Heart left ventricle (tissue), 16 donors: ENCODE measurements at regions of chr10 and their contacts with region 1.

Region 1: GRCh38 chr10:43905512-43906236 is 257.0 kb upstream of the ZNF32 start:
- DNase-seq: peak in 4 of 5 donors; percentile 72 to 80 (median 74)
- ATAC-seq: peak; percentile 52 to 70 (median 68)
- H3K4me3 ChIP-seq: no peak overlapping the region
- H3K27ac ChIP-seq: peak overlapping the region; percentile 47 to 79 (median 58)
- H3K4me1 ChIP-seq: peaks cover 9 to 47% (median 26%) of the 10 kb centered on the region in 12 donors
- H3K27me3 ChIP-seq: no peaks in the 10 kb centered on the region
- CTCF ChIP-seq: no peak
- POLR2A ChIP-seq: no peak

Region 2: DNA sequence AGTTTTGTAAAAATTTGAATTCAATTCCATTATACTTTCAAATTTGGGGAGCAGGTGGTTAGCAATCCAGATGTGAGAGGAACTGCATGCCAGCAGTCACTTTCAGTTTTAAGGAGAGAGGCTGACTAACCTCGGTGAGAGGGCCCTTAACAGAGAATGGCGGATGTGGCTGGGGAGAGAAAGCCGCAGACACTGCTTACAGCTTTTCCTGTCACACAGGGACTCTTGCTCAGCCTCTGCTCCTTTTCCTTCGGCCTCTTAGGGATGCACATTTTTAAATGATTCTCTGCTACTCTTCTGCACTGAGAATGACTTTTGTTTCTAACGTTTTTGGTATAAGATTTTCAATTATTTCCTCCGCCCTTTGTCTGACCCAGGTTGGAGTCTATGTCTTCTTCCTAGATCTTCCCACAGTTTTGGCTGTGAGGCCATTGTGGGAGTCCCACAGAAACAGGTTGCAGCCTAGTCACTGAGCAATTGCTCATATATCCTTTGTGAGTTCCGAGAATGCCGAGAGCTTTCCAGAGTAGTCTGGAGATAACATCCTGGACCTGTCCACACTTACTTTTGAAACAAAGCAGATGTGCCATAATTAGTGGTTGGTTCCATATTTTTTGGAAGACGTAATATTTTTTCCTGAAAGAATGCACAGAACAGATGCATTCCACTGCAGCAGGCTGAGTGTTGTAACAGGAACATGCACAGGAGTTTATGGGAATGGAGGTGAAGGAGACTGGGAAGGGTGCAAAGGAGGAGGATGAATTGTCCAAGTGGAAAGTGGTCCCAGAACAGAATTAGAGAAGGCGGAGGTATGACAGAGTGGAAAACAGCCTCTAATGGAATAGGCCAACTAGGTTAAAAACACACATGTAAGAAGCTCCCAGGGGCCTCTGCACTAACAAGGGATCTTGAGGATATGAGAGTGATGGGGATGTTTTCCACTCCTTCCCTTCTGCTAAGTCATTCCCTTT is 89.0 kb before region 1 on chr10:
- intact Hi-C with region 1: loop called in 1 of 10 experiments (anchors 10 kb)
- DNase-seq: peak in 4 of 5 donors; percentile 55 to 72 (median 68)
- ATAC-seq: peak; percentile 86 to 95 (median 93)
- H3K4me3 ChIP-seq: peak overlapping the region in 1 of 12 donors; percentile 1
- H3K27ac ChIP-seq: peak overlapping the region; percentile 43 to 89 (median 73)
- H3K4me1 ChIP-seq: peaks cover under 1 to 67% (median 33%) of the 10 kb centered on the region in 12 donors
- H3K27me3 ChIP-seq: no peaks in the 10 kb centered on the region
- CTCF ChIP-seq: no peak
- POLR2A ChIP-seq: no peak

Region 3: GRCh38 chr10:43863859-43864591 is 41.6 kb before region 1 on chr10:
- intact Hi-C with region 1: loop called in 1 of 10 experiments (anchors 5 kb)
- DNase-seq: peak in 4 of 5 donors; percentile 49 to 70 (median 66)
- ATAC-seq: peak; percentile 66 to 85 (median 84)
- H3K4me3 ChIP-seq: no peak overlapping the region
- H3K27ac ChIP-seq: peak overlapping the region; percentile 70 to 92 (median 84)
- H3K4me1 ChIP-seq: peaks cover 12 to 69% (median 38%) of the 10 kb centered on the region in 12 donors
- H3K27me3 ChIP-seq: no peaks in the 10 kb centered on the region
- CTCF ChIP-seq: no peak
- POLR2A ChIP-seq: no peak

Region 4: GRCh38 chr10:44416021-44416771 is 510.5 kb after region 1 on chr10:
- intact Hi-C with region 1: no loop called
- DNase-seq: peak in 2 of 5 donors; percentile 21 to 56
- ATAC-seq: peak; percentile 72 to 82 (median 76)
- H3K4me3 ChIP-seq: no peak overlapping the region
- H3K27ac ChIP-seq: peak overlapping the region; percentile 8 to 84 (median 48)
- H3K4me1 ChIP-seq: peaks cover 0 to 17% (median 0%) of the 10 kb centered on the region in 12 donors
- H3K27me3 ChIP-seq: no peaks in the 10 kb centered on the region
- CTCF ChIP-seq: no peak
- POLR2A ChIP-seq: no peak